Cardiac septum (tissue), 1 donor: ENCODE measurements at regions of chr2 and their contacts with region 1.

Region 1: GRCh38 chr2:50097148-50097547 is 934.8 kb downstream of the NRXN1 start:
- DNase-seq: no peak

Region 2: DNA sequence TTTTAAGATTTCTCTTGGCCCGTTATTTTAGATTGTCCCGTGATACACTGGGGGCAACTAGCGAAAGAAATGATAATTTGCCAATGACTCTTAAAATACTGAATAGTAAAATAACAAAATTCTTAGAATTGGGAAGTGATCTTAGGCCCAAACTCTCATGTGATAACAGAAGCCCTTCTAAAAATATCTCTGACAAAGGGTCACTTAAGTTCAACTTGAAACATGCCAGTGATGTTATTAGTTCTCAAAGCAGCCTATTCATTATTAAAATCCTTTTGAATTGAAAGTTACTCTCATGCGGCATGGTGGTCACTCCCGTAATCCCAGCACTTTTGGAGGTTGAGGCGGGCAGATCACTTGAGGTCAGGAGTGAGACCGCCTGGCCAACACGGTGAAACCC is 13.9 kb after region 1 on chr2:
- intact Hi-C with region 1: loop called (anchors 1 kb)
- DNase-seq: no peak

Region 3: DNA sequence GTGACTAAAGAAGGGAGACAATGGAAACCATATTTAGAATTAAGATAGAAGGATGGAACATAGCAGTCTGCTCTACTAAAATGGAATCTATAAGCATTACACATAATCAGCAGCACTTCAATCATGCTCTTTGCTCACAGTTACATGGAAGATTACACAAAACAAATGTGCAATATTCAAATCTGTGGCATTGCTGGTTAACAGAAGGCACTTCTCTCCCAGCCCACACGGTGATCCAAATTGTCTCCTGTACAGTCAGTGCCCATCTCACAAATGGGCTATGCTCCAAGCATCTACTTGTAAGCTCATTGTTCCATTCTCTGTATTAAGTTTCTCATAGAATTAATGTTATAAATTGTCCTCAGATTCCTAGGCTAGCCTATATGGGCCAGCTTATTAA is 218.2 kb after region 1 on chr2:
- intact Hi-C with region 1: no loop called
- DNase-seq: no peak